GM23248 (cell line): ENCODE measurements at regions of chr2 and their contacts with region 1.

Region 1: GRCh38 chr2:37982147-37982582 is 57.1 kb downstream of the RMDN2 start:
- DNase-seq: peak; percentile 80
- H3K4me3 ChIP-seq: peak overlapping the region; percentile 52
- H3K27ac ChIP-seq: no peak overlapping the region
- H3K4me1 ChIP-seq: peaks cover 13% of the 10 kb centered on the region
- H3K27me3 ChIP-seq: no peaks in the 10 kb centered on the region

Region 2: GRCh38 chr2:37635504-37636380 is 346.4 kb before region 1 on chr2:
- in situ Hi-C with region 1: no loop called
- DNase-seq: peak; percentile 92
- H3K4me3 ChIP-seq: no peak overlapping the region
- H3K27ac ChIP-seq: peak overlapping the region; percentile 86
- H3K4me1 ChIP-seq: peaks cover 73% of the 10 kb centered on the region
- H3K27me3 ChIP-seq: no peaks in the 10 kb centered on the region

Region 3: GRCh38 chr2:38274286-38275276 is 292.4 kb after region 1 on chr2:
- in situ Hi-C with region 1: loop called (anchors 5 kb)
- DNase-seq: peak; percentile 81
- H3K4me3 ChIP-seq: no peak overlapping the region
- H3K27ac ChIP-seq: no peak overlapping the region
- H3K4me1 ChIP-seq: peaks cover 2% of the 10 kb centered on the region
- H3K27me3 ChIP-seq: no peaks in the 10 kb centered on the region

Region 4: DNA sequence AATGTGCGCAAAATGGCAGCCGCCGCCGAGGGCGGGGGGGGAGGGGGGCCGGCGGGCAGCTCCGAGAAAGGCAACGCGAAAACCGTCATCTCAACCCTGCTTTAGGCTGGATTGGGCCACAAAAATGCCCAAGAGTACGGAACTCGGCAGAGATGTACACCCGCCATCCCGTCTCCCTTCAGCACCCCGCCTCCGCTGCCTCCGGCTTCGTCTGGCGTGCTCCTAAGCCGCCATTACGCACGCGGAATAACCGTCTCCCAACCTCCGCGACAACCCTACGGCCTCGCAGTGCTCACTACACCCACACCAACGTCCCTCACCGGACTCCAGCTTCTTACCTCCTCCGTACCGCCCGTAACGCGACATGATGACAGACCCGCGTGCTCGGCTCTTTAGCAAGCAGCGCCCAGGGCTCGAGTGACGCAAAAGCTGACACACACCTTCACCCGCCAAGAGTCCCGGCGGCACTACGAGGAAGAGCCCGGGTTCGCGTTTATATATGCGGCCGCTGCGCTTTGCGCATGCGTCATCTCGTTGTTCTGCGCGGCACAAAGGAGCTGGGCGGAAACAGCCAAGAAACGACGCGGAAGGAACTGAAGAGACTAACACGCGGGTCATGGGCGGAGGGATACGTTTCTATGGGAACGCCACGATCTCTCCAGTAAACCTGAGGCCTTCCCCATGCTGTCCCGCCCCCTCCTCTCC is 768.9 kb after region 1 on chr2 and contains the start of gene SRSF7:
- in situ Hi-C with region 1: no loop called
- DNase-seq: peak; percentile 99
- H3K4me3 ChIP-seq: peak within 1 kb of the TSS; percentile 86
- H3K27ac ChIP-seq: peak within 1 kb of the TSS; percentile 93
- H3K4me1 ChIP-seq: peaks cover 9% of the 10 kb centered on the region
- H3K27me3 ChIP-seq: no peaks in the 10 kb centered on the region
- total RNA-seq, gene SRSF7: 86.5 and 95.0 TPM in 2 replicates

Region 5: GRCh38 chr2:38997781-38998180 is 1015.6 kb after region 1 on chr2:
- in situ Hi-C with region 1: no loop called
- DNase-seq: peak; percentile 95
- H3K4me3 ChIP-seq: no peak overlapping the region
- H3K27ac ChIP-seq: peak overlapping the region; percentile 55
- H3K4me1 ChIP-seq: peaks cover 13% of the 10 kb centered on the region; the same call in 1 of the 2 replicates
- H3K27me3 ChIP-seq: no peaks in the 10 kb centered on the region